Activated naive CD4-positive, alpha-beta T cell treated with anti-CD3 and anti-CD28 coated beads for 36 hours (primary cell): ENCODE measurements at regions of chr20 and their contacts with region 1.

Region 1: GRCh38 chr20:54320115-54320607 is 112.3 kb downstream of the PFDN4 start:
- DNase-seq: peak; percentile 37
- H3K4me3 Mint-ChIP-seq: no peak overlapping the region
- H3K27ac Mint-ChIP-seq: peak overlapping the region; percentile 83
- H3K4me1 Mint-ChIP-seq: peaks cover 75% of the 10 kb centered on the region
- H3K27me3 Mint-ChIP-seq: peaks cover 2% of the 10 kb centered on the region

Region 2: GRCh38 chr20:54219751-54220426 is 100.3 kb before region 1 on chr20:
- CTCF ChIA-PET with region 1: interaction called, 3 read pairs
- intact Hi-C with region 1: loop called (anchors 1 kb)
- DNase-seq: peak; percentile 33
- H3K4me3 Mint-ChIP-seq: no peak overlapping the region
- H3K27ac Mint-ChIP-seq: peak overlapping the region; percentile 85
- H3K4me1 Mint-ChIP-seq: peaks cover 40% of the 10 kb centered on the region
- H3K27me3 Mint-ChIP-seq: no peaks in the 10 kb centered on the region

Region 3: DNA sequence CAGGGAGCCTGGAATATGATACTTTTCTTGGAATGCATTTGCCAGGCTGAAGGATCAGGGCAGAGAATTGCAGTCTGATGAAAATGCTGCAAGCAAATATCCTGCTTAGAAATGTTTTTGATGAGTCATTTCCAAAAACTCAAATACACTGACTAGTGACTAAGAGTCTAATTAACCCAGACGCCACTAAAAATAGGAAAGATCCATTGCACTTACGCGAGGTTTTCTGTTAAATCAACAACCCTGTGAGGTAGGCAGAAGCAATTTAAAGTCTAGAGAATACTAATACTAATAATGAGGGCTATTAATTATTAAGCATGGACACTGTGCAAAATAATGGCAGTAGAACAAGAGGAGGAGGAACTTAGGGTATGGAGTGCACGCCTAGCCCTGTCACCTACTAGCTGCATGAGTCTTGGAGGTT is 25.2 kb after region 1 on chr20:
- CTCF ChIA-PET with region 1: interaction called, 3 read pairs
- intact Hi-C with region 1: loop called (anchors 1 kb)
- DNase-seq: no peak
- H3K4me3 Mint-ChIP-seq: no peak overlapping the region
- H3K27ac Mint-ChIP-seq: no peak overlapping the region
- H3K4me1 Mint-ChIP-seq: peaks cover 15% of the 10 kb centered on the region
- H3K27me3 Mint-ChIP-seq: peaks cover 18% of the 10 kb centered on the region

Region 4: GRCh38 chr20:54475334-54476168 is 155.4 kb after region 1 on chr20 and contains the start of gene DOK5:
- CTCF ChIA-PET with region 1: no interaction called
- intact Hi-C with region 1: loop called (anchors 10 kb)
- DNase-seq: no peak
- H3K4me3 Mint-ChIP-seq: peak within 1 kb of the TSS; percentile 62
- H3K27ac Mint-ChIP-seq: no peak within 1 kb of the TSS
- H3K4me1 Mint-ChIP-seq: peaks cover 24% of the 10 kb centered on the region
- H3K27me3 Mint-ChIP-seq: peaks cover 54% of the 10 kb centered on the region
- total RNA-seq, gene DOK5: 3.9 to 4.3 TPM